PC-9 (cell line): ENCODE measurements at regions of chr20 and their contacts with region 1.

Region 1: GRCh38 chr20:44609511-44610312 is 27.3 kb downstream of the PKIG start:
- DNase-seq: peak; percentile 85 to 91
- H3K4me3 ChIP-seq: no peak overlapping the region
- H3K27ac ChIP-seq: 0 out of 2 replicates have a peak overlapping the region, but pooled peaks have one; percentile 0
- H3K4me1 ChIP-seq: peaks cover 7% of the 10 kb centered on the region
- H3K27me3 ChIP-seq: no peaks in the 10 kb centered on the region
- CTCF ChIP-seq: peak; percentile 99

Region 2: DNA sequence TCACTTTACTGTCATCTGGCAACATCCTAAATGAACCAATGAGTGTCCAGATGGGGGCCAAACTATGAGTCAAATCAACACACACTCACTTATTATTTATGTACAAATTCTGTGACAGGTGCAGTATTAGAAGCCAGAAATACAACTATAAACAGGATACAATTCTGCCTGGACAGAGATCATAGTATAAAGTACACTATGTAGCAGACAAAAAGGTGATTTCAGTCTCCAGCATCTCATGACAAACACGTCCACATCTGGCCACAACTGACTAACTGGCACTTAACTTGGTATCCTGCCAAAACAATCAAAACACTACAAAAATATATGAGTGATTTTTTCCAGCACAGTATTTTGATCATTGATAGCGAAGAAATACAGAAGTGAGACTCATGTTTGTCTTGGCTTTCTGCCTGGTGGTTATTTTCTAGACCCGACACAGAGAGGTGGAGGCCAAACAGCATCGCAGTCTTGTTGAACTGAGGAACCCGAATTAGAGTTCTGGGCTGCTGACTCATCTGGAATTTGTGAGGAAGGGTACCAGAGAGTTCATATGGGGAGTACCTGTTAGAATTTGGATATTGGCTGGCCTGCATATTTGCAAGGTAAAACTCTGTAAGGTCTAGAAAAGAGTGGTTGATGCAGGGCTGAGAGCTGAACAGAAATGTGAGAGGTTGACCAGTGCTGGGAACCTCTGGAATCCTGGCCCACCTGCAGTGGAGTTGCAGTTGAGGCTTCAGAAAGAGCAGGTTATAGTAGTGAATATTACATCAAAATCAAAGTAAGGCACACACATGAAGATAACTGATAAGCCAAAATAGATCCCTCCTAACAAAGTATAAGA is 1895.2 kb before region 1 on chr20:
- CTCF ChIA-PET with region 1: no interaction called
- POLR2A ChIA-PET with region 1: no interaction called
- intact Hi-C with region 1: no loop called
- DNase-seq: no peak
- H3K4me3 ChIP-seq: no peak overlapping the region
- H3K27ac ChIP-seq: no peak overlapping the region
- H3K4me1 ChIP-seq: no peaks in the 10 kb centered on the region
- H3K27me3 ChIP-seq: no peaks in the 10 kb centered on the region
- CTCF ChIP-seq: no peak

Region 3: GRCh38 chr20:44109951-44110361 is 499.8 kb before region 1 on chr20:
- CTCF ChIA-PET with region 1: no interaction called
- POLR2A ChIA-PET with region 1: no interaction called
- intact Hi-C with region 1: loop called (anchors 10 kb)
- DNase-seq: no peak
- H3K4me3 ChIP-seq: no peak overlapping the region
- H3K27ac ChIP-seq: no peak overlapping the region
- H3K4me1 ChIP-seq: no peaks in the 10 kb centered on the region
- H3K27me3 ChIP-seq: no peaks in the 10 kb centered on the region
- CTCF ChIP-seq: peak; percentile 43; the same call in 1 of the 2 replicates

Region 4: GRCh38 chr20:44137210-44137801 is 472.4 kb before region 1 on chr20:
- CTCF ChIA-PET with region 1: no interaction called
- POLR2A ChIA-PET with region 1: no interaction called
- intact Hi-C with region 1: no loop called
- DNase-seq: peak in 1 of 2 experiments; percentile 34
- H3K4me3 ChIP-seq: no peak overlapping the region
- H3K27ac ChIP-seq: no peak overlapping the region
- H3K4me1 ChIP-seq: no peaks in the 10 kb centered on the region
- H3K27me3 ChIP-seq: no peaks in the 10 kb centered on the region
- CTCF ChIP-seq: no peak

Region 5: DNA sequence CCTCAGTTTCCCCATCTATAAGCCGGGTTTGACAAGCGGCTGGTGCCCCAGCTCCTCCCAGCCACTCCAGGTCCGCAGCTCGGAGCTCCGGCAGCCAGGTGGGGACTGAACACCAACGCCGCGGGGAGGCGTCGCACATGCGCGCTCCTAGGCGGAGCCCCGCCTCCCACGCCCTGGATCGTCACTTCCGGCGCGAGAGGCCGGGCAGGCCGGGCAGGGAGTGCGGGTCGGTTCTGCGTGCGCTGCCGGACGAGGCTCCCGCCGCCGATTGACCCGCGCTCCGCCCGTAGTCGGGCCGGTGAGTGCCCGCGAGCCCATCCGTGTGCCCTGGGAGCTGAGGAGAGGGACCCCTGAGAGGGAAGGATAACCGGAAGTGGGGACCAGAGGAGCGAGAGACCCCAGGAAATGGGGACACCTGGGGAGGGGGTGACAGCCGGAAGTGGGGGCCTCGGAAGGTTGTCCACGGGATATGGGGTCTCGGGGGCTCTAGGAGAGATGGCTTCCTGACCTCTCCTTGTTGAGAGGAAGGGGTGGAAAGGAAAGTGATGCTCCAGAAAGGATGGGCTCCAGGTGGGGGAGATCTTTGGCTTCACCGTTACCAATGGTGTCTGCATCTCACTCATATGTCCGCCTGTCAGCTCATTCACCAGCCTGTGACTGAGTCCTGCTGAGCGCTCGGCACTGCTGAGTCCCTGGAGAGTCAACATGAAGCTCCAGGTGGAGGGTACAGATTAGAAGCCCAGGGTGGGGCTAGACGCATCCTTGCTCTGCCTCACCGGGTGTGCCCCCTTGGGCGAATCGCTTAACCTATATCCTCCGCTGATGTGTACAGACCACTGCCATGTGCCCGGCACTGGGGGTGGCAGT is 133.8 kb before region 1 on chr20 and contains the start of gene TTPAL:
- CTCF ChIA-PET with region 1: no interaction called
- POLR2A ChIA-PET with region 1: no interaction called
- intact Hi-C with region 1: loop called (anchors 1 kb)
- DNase-seq: peak; percentile 77 to 93
- H3K4me3 ChIP-seq: peak within 1 kb of the TSS; percentile 88
- H3K27ac ChIP-seq: peak within 1 kb of the TSS; percentile 37
- H3K4me1 ChIP-seq: peaks cover 22% of the 10 kb centered on the region
- H3K27me3 ChIP-seq: no peaks in the 10 kb centered on the region
- CTCF ChIP-seq: peak; percentile 31; the same call in 1 of the 2 replicates
- total RNA-seq, gene TTPAL: 28.5 and 31.3 TPM in 2 replicates

Region 6: DNA sequence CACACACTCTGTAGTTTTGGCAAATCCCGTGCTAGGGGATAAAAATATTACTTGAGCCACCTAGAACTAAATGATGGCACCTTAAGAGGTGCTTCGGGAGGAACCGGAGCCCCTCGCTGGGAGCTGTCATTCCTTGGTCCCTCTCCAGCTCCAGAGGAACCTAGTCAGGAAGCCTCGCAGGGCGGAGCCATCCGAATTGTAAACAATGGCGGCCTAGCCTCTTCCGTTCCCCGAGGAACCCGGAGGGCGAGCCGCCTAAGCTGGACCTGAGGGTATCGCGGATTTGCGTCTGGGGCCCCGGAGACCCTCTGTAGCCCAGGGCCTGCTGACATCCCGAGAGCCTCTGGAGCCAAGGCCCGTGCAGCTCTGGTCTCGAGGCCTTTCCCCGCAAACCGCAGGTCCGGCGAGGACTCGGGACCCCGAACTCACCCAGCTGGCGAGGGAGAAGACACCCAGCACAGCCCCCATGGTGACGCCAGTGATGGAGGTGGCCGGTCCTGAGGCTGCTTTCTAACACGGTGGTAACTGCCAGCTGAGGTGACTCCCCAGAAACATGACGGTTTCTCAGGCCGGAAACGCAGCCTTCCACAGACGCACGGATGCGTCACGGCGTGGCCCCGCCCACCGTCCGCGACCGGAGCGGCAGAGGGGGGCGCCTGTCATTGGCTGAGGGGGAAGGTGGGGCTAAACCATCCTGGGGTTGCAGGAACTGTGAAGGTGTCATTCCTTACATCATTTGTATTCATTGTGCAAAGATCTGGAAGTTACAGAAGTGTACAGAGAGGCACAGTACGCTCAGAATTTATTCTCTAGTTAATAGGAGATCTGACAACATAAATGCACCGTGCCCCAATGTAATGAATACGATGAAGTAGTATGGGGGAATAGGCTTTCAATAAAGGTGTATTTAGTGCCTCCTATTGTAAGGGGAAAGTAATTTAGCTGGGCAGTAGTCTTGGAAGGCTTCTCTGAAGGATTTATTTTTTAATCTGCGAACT is 87.9 kb before region 1 on chr20 and contains the start of gene SERINC3:
- CTCF ChIA-PET with region 1: no interaction called
- POLR2A ChIA-PET with region 1: no interaction called
- intact Hi-C with region 1: loop called (anchors 2 kb)
- DNase-seq: peak; percentile 93 to 96
- H3K4me3 ChIP-seq: peak within 1 kb of the TSS; percentile 92
- H3K27ac ChIP-seq: peak within 1 kb of the TSS; percentile 72
- H3K4me1 ChIP-seq: peaks cover 39% of the 10 kb centered on the region
- H3K27me3 ChIP-seq: no peaks in the 10 kb centered on the region
- CTCF ChIP-seq: 0 out of 2 replicates have a peak, but pooled peaks have one; percentile 39
- total RNA-seq, gene SERINC3: 76.0 and 110 TPM in 2 replicates

Region 7: GRCh38 chr20:44866703-44867335 is 257.1 kb after region 1 on chr20:
- CTCF ChIA-PET with region 1: no interaction called
- POLR2A ChIA-PET with region 1: no interaction called
- intact Hi-C with region 1: loop called (anchors 1 kb)
- DNase-seq: no peak
- H3K4me3 ChIP-seq: no peak overlapping the region
- H3K27ac ChIP-seq: no peak overlapping the region
- H3K4me1 ChIP-seq: no peaks in the 10 kb centered on the region
- H3K27me3 ChIP-seq: 0 out of 2 replicates have a peak, but pooled peaks cover 17% of the 10 kb centered on the region
- CTCF ChIP-seq: no peak